Mammary epithelial cell (primary cell): ENCODE measurements at regions of chr2 and their contacts with region 1.

Region 1: DNA sequence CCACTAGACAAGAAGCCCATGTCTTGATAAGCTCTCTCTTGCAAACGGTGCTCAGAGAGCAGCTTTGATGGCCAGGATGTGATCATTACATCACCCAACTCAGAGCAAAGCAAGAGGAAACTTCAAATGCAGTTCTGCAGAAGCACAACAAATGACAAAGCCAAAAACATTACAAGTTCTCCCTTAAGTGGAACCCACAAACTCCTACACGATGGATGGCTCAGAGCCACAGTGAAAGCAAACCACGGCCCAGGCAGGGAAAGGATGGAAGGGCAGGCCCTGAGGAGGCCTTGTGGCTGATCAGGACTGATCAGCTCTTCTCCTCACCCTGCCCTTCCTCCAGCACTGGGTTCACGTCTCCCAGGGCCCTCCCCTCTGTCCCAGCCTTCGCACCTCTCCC is 326.4 kb downstream of the EIPR1 start:
- DNase-seq: no peak
- H3K4me3 ChIP-seq: no peak overlapping the region
- H3K27ac ChIP-seq: no peak overlapping the region
- H3K4me1 ChIP-seq: no peaks in the 10 kb centered on the region
- H3K27me3 ChIP-seq: no peaks in the 10 kb centered on the region
- CTCF ChIP-seq: no peak

Region 2: DNA sequence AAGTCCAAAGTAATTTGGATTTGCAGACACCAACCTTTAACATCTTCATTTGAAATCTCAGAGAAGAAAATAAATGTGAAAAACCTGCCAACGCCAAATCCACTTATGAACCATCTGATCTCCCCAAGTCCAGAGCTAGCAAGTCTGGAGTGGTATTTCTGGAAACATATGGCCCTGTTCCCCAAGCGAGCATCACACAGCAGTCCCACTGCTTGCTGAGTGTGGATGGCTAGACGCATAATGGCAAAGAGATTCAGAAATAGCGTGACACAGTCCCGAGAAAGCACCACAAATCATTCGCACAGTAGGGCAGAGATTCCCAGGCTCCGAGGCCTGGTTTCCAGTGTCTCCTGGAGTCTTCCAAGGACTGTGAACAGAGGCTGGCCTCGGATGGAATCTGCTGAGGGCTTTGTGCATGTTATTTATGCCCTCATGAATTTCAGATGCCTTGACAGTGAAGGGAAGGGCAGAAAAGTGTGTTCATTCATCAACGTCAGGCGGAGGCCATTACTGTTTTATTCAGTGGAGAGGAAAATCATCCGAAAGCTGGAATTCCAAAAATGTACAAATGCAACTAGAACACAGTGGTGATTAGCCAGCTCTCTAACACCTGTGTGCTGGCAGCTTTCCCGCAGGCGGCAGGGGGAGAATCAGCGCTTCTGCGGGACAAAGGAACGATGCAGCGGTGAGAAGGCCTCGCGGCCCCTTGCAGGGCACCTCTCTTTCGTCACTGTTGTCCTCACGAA is 90.7 kb before region 1 on chr2:
- CTCF ChIA-PET with region 1: no interaction called
- dilution Hi-C with region 1: loop called (anchors 5 kb)
- in situ Hi-C with region 1: no loop called
- intact Hi-C with region 1: no loop called
- DNase-seq: no peak
- H3K4me3 ChIP-seq: no peak overlapping the region
- H3K27ac ChIP-seq: no peak overlapping the region
- H3K4me1 ChIP-seq: no peaks in the 10 kb centered on the region
- H3K27me3 ChIP-seq: no peaks in the 10 kb centered on the region
- CTCF ChIP-seq: no peak

Region 3: DNA sequence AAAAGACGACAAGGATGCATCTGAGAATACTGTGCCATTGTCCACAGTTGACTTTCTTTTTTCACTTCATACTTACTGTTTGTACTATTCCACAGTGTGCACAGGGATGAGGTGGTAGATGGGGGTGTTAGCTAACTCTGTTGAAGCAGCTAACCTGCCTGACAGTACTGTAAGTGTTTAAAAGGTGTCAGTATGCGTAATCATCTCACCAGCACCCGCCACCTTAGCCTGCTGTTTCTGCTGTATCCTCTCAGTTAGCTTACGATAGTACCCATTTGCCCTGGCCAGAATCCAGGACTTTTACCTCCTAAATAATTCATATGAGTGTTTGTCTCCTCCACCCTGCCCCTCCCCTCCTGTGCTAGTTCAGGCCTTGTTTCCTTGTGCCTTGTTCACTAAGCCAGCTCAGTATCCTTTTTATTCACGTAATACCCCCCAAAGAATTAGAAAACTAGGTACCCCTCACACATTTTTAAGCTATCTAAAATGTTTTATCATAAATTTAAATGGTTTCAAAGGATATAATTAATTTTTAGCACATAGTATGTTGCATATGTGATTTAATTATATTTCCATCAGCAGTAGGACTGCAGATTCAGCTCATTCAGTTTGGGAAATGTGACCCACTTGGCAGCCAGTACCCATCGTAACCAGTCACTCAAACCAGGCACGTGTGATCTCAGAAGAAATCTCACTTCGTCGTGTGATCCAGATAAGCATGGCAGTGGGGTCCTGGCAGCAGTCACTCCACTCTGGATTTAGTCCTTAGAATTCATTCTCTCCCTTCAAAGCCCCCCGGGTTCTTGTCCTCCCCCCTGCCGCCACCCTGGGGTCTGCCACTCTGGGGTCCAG is 362.6 kb after region 1 on chr2:
- CTCF ChIA-PET with region 1: no interaction called
- dilution Hi-C with region 1: no loop called
- in situ Hi-C with region 1: no loop called
- intact Hi-C with region 1: no loop called
- DNase-seq: no peak
- H3K4me3 ChIP-seq: no peak overlapping the region
- H3K27ac ChIP-seq: no peak overlapping the region
- H3K4me1 ChIP-seq: no peaks in the 10 kb centered on the region
- H3K27me3 ChIP-seq: no peaks in the 10 kb centered on the region
- CTCF ChIP-seq: no peak